CD4-positive, alpha-beta memory T cell (primary cell): ENCODE measurements at regions of chr22 and their contacts with region 1.

Region 1: GRCh38 chr22:40024201-40025061 is 29.7 kb downstream of the FAM83F start:
- DNase-seq: peak in 4 of 5 donors; percentile 41 to 48 (median 47)
- H3K4me3 ChIP-seq: no peak overlapping the region
- H3K4me3 Mint-ChIP-seq: no peak overlapping the region
- H3K27ac ChIP-seq: no peak overlapping the region
- H3K27ac Mint-ChIP-seq: no peak overlapping the region
- H3K4me1 ChIP-seq: no peaks in the 10 kb centered on the region
- H3K4me1 Mint-ChIP-seq: peaks cover 0 to 2% (median 0%) of the 10 kb centered on the region in 4 donors
- H3K27me3 ChIP-seq: no peaks in the 10 kb centered on the region
- H3K27me3 Mint-ChIP-seq: peaks cover 0 to 1% of the 10 kb centered on the region in 2 donors

Region 2: GRCh38 chr22:39490135-39490798 is 534.2 kb before region 1 on chr22:
- CTCF ChIA-PET with region 1: interaction called, 21 read pairs
- POLR2A ChIA-PET with region 1: no interaction called
- intact Hi-C with region 1: loop called (anchors 1 kb)
- DNase-seq: peak; percentile 66 to 83 (median 77)
- H3K4me3 ChIP-seq: no peak overlapping the region
- H3K4me3 Mint-ChIP-seq: peak overlapping the region in 2 of 8 donors; percentile 17 to 71
- H3K27ac ChIP-seq: no peak overlapping the region
- H3K27ac Mint-ChIP-seq: peak overlapping the region in 6 of 7 donors; percentile 10 to 81 (median 44)
- H3K4me1 ChIP-seq: peaks cover 6% of the 10 kb centered on the region
- H3K4me1 Mint-ChIP-seq: peaks cover 5 to 13% (median 9%) of the 10 kb centered on the region in 4 donors
- H3K27me3 ChIP-seq: no peaks in the 10 kb centered on the region
- H3K27me3 Mint-ChIP-seq: no peaks in the 10 kb centered on the region

Region 3: DNA sequence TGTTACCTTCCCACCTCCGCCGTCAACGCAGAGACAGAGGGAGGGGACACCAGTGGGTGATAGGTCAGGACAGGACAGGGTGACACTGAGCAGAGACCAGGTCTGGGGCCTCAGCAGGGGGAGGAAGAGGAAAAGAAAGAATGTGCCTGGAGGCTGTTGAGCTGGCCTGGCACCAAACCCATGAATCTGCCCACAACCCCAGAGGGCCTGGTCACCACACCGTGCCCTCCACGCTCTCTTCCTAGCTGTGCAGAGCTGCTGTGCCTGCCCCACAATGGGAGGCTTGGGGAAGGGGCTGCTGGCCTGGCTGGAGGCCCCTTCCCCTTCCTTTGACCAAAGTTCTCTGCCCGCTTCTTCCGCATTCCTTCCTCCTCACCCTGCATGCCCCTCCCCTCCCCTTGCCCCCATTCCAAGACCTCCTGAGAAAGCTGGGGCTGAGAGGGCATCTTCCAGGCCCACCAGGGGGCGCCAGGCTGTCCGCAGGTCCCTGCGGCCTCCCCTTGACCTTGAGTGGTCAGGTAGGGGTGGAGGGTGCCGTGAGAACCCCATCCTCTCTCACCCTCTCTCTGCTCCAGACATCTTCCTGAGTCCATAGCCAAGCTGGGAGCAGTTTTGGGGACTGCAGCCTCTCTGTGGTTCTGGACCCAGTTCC is 464.9 kb before region 1 on chr22:
- CTCF ChIA-PET with region 1: interaction called, 37 read pairs
- POLR2A ChIA-PET with region 1: interaction called, 3 read pairs
- intact Hi-C with region 1: no loop called
- DNase-seq: no peak
- H3K4me3 ChIP-seq: no peak overlapping the region
- H3K4me3 Mint-ChIP-seq: peak overlapping the region in 1 of 8 donors; percentile 23
- H3K27ac ChIP-seq: no peak overlapping the region
- H3K27ac Mint-ChIP-seq: no peak overlapping the region
- H3K4me1 ChIP-seq: peaks cover 6% of the 10 kb centered on the region
- H3K4me1 Mint-ChIP-seq: peaks cover 0 to 9% (median 2%) of the 10 kb centered on the region in 4 donors
- H3K27me3 ChIP-seq: peaks cover 21% of the 10 kb centered on the region
- H3K27me3 Mint-ChIP-seq: peaks cover 19 to 26% of the 10 kb centered on the region in 2 donors

Region 4: GRCh38 chr22:39622881-39623367 is 401.5 kb before region 1 on chr22:
- CTCF ChIA-PET with region 1: interaction called, 23 read pairs
- POLR2A ChIA-PET with region 1: no interaction called
- intact Hi-C with region 1: loop called (anchors 1 kb)
- DNase-seq: peak; percentile 58 to 69 (median 64)
- H3K4me3 ChIP-seq: no peak overlapping the region
- H3K4me3 Mint-ChIP-seq: no peak overlapping the region
- H3K27ac ChIP-seq: no peak overlapping the region
- H3K27ac Mint-ChIP-seq: no peak overlapping the region
- H3K4me1 ChIP-seq: peaks cover 9% of the 10 kb centered on the region
- H3K4me1 Mint-ChIP-seq: peaks cover 4 to 5% (median 5%) of the 10 kb centered on the region in 4 donors
- H3K27me3 ChIP-seq: no peaks in the 10 kb centered on the region
- H3K27me3 Mint-ChIP-seq: peaks cover 1 to 8% of the 10 kb centered on the region in 2 donors

Region 5: DNA sequence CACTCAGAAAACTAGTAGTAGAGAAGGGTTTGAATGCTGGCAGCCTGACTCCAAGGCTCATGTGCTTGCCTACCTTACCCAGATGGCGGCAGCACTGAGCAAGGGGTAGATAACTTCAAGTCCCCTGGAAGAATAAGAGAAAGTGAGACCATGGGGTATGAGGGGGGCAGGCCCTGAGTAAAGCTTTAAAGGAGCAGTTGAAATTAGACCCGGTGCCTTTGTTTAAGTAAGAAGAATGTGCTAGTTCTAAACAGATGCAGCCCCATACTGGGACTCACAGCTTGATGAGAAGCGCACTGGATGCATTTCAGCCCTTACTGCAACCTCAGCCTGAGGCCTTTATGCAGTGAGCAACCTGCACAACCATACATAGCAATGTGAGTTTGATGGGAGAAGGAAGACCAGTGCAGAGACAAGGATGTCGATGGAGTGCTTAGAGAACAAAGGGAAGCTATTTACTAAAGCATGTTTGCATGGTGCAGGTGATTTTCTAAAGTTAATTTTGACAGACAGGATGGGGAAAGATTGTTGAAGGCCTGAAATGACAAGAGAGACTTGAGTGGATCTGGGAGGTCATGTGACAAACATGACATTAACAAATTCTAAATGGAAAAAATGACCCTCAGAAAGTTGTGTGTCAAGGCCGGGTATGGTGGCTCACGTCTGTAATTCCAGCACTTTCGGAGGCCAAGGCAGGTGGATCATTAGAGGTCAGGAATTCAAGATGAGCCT is 91.3 kb before region 1 on chr22:
- CTCF ChIA-PET with region 1: interaction called, 11 read pairs
- POLR2A ChIA-PET with region 1: no interaction called
- intact Hi-C with region 1: no loop called
- DNase-seq: peak in 4 of 5 donors; percentile 55 to 61 (median 58)
- H3K4me3 ChIP-seq: no peak overlapping the region
- H3K4me3 Mint-ChIP-seq: peak overlapping the region; percentile 61 to 88 (median 79)
- H3K27ac ChIP-seq: peak overlapping the region; percentile 53
- H3K27ac Mint-ChIP-seq: peak overlapping the region in 6 of 7 donors; percentile 92 to 97 (median 96)
- H3K4me1 ChIP-seq: peaks cover 100% of the 10 kb centered on the region
- H3K4me1 Mint-ChIP-seq: peaks cover 55 to 56% (median 55%) of the 10 kb centered on the region in 4 donors
- H3K27me3 ChIP-seq: no peaks in the 10 kb centered on the region
- H3K27me3 Mint-ChIP-seq: no peaks in the 10 kb centered on the region

Region 6: GRCh38 chr22:39999144-39999757 is 25.2 kb before region 1 on chr22:
- CTCF ChIA-PET with region 1: interaction called, 10 read pairs
- POLR2A ChIA-PET with region 1: no interaction called
- intact Hi-C with region 1: no loop called
- DNase-seq: no peak
- H3K4me3 ChIP-seq: no peak overlapping the region
- H3K4me3 Mint-ChIP-seq: no peak overlapping the region
- H3K27ac ChIP-seq: no peak overlapping the region
- H3K27ac Mint-ChIP-seq: peak overlapping the region in 1 of 7 donors; percentile 18
- H3K4me1 ChIP-seq: peaks cover 6% of the 10 kb centered on the region
- H3K4me1 Mint-ChIP-seq: peaks cover 0 to 2% (median under 1%) of the 10 kb centered on the region in 4 donors
- H3K27me3 ChIP-seq: peaks cover 18% of the 10 kb centered on the region
- H3K27me3 Mint-ChIP-seq: peaks cover 15 to 22% of the 10 kb centered on the region in 2 donors

Region 7: GRCh38 chr22:40036591-40037225 is 12.3 kb after region 1 on chr22:
- CTCF ChIA-PET with region 1: interaction called, 21 read pairs
- POLR2A ChIA-PET with region 1: interaction called, 3 read pairs
- intact Hi-C with region 1: no loop called
- DNase-seq: peak in 4 of 5 donors; percentile 29 to 40 (median 34)
- H3K4me3 ChIP-seq: no peak overlapping the region
- H3K4me3 Mint-ChIP-seq: no peak overlapping the region
- H3K27ac ChIP-seq: no peak overlapping the region
- H3K27ac Mint-ChIP-seq: no peak overlapping the region
- H3K4me1 ChIP-seq: no peaks in the 10 kb centered on the region
- H3K4me1 Mint-ChIP-seq: peaks cover 0 to 2% (median under 1%) of the 10 kb centered on the region in 4 donors
- H3K27me3 ChIP-seq: no peaks in the 10 kb centered on the region
- H3K27me3 Mint-ChIP-seq: peaks cover 11 to 19% of the 10 kb centered on the region in 2 donors

Region 8: GRCh38 chr22:40161194-40161593 is 136.8 kb after region 1 on chr22:
- CTCF ChIA-PET with region 1: no interaction called
- POLR2A ChIA-PET with region 1: no interaction called
- intact Hi-C with region 1: no loop called
- DNase-seq: no peak
- H3K4me3 ChIP-seq: no peak overlapping the region
- H3K4me3 Mint-ChIP-seq: no peak overlapping the region
- H3K27ac ChIP-seq: no peak overlapping the region
- H3K27ac Mint-ChIP-seq: peak overlapping the region in 2 of 7 donors; percentile 10 to 61
- H3K4me1 ChIP-seq: no peaks in the 10 kb centered on the region
- H3K4me1 Mint-ChIP-seq: peaks cover 0 to 20% (median 8%) of the 10 kb centered on the region in 4 donors
- H3K27me3 ChIP-seq: no peaks in the 10 kb centered on the region
- H3K27me3 Mint-ChIP-seq: no peaks in the 10 kb centered on the region